ENCODE measurements at regions of chr7 and their contacts with region 1.

Region 1: GRCh38 chr7:107168233-107169119 is at the start of gene HBP1:
- DNase-seq: peak; percentile 98
- H3K4me3 Mint-ChIP-seq: peak within 1 kb of the TSS; percentile 89
- H3K27ac Mint-ChIP-seq: peak within 1 kb of the TSS; percentile 96
- H3K4me1 Mint-ChIP-seq: peaks cover 36% of the 10 kb centered on the region
- H3K27me3 Mint-ChIP-seq: peaks cover 15% of the 10 kb centered on the region
- total RNA-seq, gene HBP1: 17.0 and 19.3 TPM in 2 replicates

Region 2: GRCh38 chr7:106112117-106112971 is 1056.1 kb before region 1 on chr7 and contains the start of gene SYPL1:
- intact Hi-C with region 1: loop called (anchors 2 kb)
- DNase-seq: peak; percentile 89
- H3K4me3 Mint-ChIP-seq: peak within 1 kb of the TSS; percentile 83
- H3K27ac Mint-ChIP-seq: peak within 1 kb of the TSS; percentile 92
- H3K4me1 Mint-ChIP-seq: peaks cover 54% of the 10 kb centered on the region
- H3K27me3 Mint-ChIP-seq: no peaks in the 10 kb centered on the region
- total RNA-seq, gene SYPL1: 38.2 and 40.9 TPM in 2 replicates

Region 3: DNA sequence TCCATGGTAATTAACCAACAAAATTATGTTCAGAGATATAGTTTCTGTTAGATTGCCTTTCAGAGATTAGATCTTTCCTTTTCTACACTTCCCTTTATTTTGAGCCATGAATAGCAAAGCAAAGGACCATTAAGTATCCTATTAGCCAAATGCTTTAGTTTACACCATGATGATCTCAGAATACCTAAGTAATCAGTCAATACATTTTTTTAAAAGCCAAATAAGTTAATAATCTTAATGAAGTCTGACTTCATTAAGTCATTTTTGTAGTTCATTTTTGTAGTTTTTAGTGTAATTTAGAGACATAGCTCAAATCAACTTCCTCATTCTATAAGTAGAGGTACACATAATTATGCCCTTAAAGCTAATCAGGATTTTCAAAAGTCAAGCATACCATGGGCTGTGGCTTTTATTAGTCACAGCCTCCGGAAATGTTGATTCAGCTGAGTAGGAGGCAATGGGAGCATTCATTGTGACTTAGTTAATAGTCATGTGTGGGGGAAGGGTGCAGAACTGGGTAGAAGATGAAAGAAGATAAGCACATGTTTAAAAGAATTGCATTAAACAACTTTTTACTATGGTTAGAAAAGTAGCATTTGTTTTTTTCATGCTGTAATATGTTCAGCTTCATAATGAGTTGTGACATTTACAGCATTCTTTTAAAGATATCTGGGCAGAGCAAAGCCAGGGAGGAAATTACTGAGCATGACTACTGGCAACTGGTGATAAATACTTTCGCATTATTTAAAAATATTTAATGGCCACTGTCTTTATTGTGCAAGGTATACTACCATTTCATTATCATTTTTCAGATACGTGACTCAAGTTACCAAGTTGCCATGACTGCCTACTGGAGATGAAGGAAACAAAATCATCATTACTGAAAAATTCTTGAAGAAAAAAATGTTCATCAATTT is 450.3 kb before region 1 on chr7:
- intact Hi-C with region 1: loop called (anchors 5 kb)
- DNase-seq: peak; percentile 56
- H3K4me3 Mint-ChIP-seq: no peak overlapping the region
- H3K27ac Mint-ChIP-seq: no peak overlapping the region
- H3K4me1 Mint-ChIP-seq: peaks cover 30% of the 10 kb centered on the region
- H3K27me3 Mint-ChIP-seq: no peaks in the 10 kb centered on the region

Region 4: DNA sequence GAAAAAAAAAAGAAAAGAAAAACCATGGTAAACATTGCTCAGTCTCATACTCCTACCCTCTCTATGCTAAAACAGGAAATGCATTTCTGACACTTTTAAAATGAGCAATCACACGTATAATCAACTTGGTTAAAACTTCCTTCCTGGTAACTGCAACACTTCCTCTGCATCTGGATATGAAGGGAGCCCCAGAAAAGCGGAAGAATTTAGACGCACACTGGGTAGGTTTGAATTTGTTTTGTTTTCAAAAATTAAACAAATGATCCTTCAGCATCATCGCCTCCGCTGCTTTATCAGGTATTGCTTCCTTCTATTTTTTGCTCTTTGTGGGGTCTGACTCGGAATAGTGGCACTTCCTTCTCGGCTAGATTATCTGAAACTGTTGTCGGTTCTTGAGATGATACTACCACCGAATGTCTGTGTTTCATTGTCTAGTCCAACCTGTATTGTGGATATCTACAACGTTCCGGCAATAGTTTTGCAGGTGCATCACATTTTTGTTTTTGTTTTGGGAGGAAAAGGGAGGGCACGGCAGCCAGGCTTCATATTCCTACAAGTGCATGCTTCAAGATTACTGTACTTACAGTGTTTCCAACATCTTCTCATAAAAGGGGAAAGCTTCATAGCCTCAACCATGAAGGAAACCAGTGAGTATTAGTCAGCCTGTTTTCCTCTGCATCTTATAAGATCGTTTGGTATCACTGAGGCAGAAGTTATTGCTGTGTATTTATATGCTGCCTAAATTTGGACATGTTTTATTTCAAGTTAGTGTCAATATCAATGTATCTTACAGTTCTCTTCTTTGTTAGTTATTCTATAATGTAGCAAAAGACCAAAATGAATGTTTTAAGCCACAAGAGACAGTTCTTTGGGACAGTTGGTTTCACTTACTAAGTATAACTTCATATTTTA is 303.1 kb before region 1 on chr7 and contains the start of gene PIK3CG:
- intact Hi-C with region 1: loop called (anchors 1 kb)
- DNase-seq: peak; percentile 16
- H3K4me3 Mint-ChIP-seq: peak within 1 kb of the TSS; percentile 91
- H3K27ac Mint-ChIP-seq: peak within 1 kb of the TSS; percentile 85
- H3K4me1 Mint-ChIP-seq: peaks cover 41% of the 10 kb centered on the region
- H3K27me3 Mint-ChIP-seq: no peaks in the 10 kb centered on the region
- total RNA-seq, gene PIK3CG: 36.6 and 36.7 TPM in 2 replicates

Region 5: GRCh38 chr7:107579885-107580715 is 411.6 kb after region 1 on chr7 and contains the start of gene BCAP29:
- intact Hi-C with region 1: loop called (anchors 5 kb)
- DNase-seq: peak; percentile 68
- H3K4me3 Mint-ChIP-seq: peak within 1 kb of the TSS; percentile 90
- H3K27ac Mint-ChIP-seq: peak within 1 kb of the TSS; percentile 85
- H3K4me1 Mint-ChIP-seq: peaks cover 27% of the 10 kb centered on the region
- H3K27me3 Mint-ChIP-seq: no peaks in the 10 kb centered on the region
- total RNA-seq, gene BCAP29: 46.6 and 52.0 TPM in 2 replicates

Region 6: GRCh38 chr7:107743567-107744344 is 575.3 kb after region 1 on chr7 and contains the start of gene CBLL1:
- intact Hi-C with region 1: loop called (anchors 1 kb)
- DNase-seq: peak; percentile 98
- H3K4me3 Mint-ChIP-seq: peak within 1 kb of the TSS; percentile 96
- H3K27ac Mint-ChIP-seq: peak within 1 kb of the TSS; percentile 100
- H3K4me1 Mint-ChIP-seq: peaks cover 33% of the 10 kb centered on the region
- H3K27me3 Mint-ChIP-seq: peaks cover 4% of the 10 kb centered on the region
- total RNA-seq, gene CBLL1: 39.1 and 43.7 TPM in 2 replicates

Region 7: DNA sequence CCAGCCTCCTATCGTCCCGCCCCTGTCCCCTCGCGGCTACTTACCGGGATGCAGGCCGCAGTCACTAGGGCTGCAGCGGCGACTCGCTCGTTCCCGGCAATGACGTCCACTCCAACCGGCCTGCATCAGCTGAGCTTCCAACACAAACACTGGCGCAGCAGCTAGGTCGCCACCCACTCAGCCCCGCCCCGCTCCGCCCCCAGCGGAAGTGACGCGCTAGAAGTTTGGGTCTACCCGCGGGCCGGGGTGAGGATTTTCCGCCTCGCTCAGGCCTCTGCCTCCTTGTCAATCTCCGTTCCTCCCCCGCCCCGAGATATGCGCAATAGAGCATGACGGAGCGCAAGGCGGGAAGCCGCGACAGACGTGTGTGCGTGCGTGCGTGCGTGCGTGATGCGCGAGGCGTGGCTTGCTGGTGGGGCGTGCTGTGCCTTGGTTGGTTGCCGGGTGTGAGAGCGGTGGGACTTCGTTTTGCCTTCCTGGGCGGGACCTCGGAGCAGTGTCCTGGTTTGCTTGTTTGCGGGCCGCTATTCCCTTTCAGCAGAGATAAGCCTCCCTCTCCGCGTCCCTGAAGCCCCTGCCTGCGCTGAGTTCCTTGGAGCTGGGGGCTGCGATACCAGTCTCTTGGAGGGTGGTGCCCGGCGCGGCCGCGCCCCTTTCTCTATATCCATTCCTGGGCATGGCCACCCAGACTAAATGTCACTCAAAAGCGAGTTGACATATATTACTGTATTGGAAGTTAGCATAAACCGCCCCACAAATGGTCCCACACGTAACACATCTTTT is 1357.7 kb after region 1 on chr7 and contains the start of gene PNPLA8:
- intact Hi-C with region 1: loop called (anchors 2 kb)
- DNase-seq: peak; percentile 100
- H3K4me3 Mint-ChIP-seq: peak within 1 kb of the TSS; percentile 89
- H3K27ac Mint-ChIP-seq: peak within 1 kb of the TSS; percentile 98
- H3K4me1 Mint-ChIP-seq: peaks cover 39% of the 10 kb centered on the region
- H3K27me3 Mint-ChIP-seq: peaks cover 4% of the 10 kb centered on the region
- total RNA-seq, gene PNPLA8: 21.5 and 22.4 TPM in 2 replicates

Measured in activated T-helper 2 cell treated with anti-CD3 and anti-CD28 coated beads, Interferon-gamma antibody, Interleukin-2, Interleukin-4, amounts not matched to agents 10 μg/mL and 5 μg/mL and 100 μg/mL, durations not matched to agents 14 hours and 24 hours and 36 hours (primary cell).